HEK293 (cell line): ENCODE measurements at regions of chr9 and their contacts with region 1.

Region 1: GRCh38 chr9:72364679-72365524 is at the start of gene ZFAND5:
- H3K4me3 ChIP-seq: peak within 1 kb of the TSS; percentile 85
- H3K27ac ChIP-seq: peak within 1 kb of the TSS; percentile 97
- H3K4me1 ChIP-seq: peaks cover 13% of the 10 kb centered on the region
- CTCF ChIP-seq: peak; percentile 54; the same call in 1 of the 2 replicates

Region 2: DNA sequence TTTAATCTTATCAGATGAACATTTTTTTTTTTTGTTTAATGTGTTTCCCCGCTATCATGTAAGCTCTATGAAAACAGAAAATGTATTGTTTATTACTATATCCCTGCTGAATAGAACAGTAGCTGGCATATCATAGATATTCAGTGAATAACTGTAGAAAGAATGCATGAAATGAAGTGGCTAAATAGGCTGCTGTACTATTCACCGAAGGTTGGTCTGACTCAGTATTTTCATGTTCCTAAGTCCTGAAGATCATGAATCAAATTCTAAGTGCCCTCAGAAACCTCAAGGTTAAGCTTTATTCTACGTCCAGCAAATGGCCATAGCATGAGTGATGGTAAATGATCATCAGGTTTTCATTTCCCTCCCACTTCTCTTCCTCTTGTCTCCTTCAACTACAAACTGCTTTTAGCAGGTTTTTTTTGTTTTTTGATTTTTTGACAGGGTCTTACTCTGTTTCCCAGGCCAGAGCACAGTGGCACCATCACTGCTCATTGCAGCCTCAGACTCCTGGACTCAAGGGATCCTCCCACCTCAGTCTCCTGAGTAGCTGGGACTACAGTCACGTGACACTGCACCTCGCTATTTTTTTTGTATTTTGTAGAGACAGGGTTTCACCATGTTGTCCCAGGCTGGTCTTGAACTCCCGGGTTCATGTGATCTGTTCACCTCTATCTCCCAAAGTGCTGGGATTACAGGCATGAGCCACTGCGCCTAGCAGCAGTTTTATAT is 19.2 kb after region 1 on chr9:
- CTCF ChIA-PET with region 1: no interaction called
- POLR2A ChIA-PET with region 1: interaction called, 11 read pairs
- H3K4me3 ChIP-seq: no peak overlapping the region
- H3K27ac ChIP-seq: no peak overlapping the region
- H3K4me1 ChIP-seq: no peaks in the 10 kb centered on the region
- CTCF ChIP-seq: no peak

Region 3: DNA sequence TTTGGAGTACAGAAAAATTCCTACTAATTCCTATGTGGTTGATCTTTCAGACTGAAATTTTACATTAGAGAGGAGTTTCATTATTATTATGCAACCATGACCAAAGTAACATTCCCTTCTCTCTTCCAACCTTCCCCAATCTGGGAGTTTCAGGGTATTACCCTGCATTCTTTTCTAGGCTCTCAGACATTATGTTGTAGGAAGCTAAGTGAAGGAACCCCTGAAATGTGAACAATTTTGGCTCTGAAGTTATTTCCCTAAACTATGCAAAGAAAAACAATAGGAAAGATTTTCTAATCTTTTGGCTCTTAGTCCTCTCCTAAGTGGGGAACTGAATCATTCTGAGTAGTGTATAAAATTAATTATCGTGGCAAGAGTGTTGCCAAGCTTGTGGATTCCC is 63.4 kb after region 1 on chr9:
- CTCF ChIA-PET with region 1: no interaction called
- POLR2A ChIA-PET with region 1: interaction called, 15 read pairs
- H3K4me3 ChIP-seq: no peak overlapping the region
- H3K27ac ChIP-seq: no peak overlapping the region
- H3K4me1 ChIP-seq: no peaks in the 10 kb centered on the region; the same call in 1 of the 2 replicates
- CTCF ChIP-seq: no peak

Region 4: DNA sequence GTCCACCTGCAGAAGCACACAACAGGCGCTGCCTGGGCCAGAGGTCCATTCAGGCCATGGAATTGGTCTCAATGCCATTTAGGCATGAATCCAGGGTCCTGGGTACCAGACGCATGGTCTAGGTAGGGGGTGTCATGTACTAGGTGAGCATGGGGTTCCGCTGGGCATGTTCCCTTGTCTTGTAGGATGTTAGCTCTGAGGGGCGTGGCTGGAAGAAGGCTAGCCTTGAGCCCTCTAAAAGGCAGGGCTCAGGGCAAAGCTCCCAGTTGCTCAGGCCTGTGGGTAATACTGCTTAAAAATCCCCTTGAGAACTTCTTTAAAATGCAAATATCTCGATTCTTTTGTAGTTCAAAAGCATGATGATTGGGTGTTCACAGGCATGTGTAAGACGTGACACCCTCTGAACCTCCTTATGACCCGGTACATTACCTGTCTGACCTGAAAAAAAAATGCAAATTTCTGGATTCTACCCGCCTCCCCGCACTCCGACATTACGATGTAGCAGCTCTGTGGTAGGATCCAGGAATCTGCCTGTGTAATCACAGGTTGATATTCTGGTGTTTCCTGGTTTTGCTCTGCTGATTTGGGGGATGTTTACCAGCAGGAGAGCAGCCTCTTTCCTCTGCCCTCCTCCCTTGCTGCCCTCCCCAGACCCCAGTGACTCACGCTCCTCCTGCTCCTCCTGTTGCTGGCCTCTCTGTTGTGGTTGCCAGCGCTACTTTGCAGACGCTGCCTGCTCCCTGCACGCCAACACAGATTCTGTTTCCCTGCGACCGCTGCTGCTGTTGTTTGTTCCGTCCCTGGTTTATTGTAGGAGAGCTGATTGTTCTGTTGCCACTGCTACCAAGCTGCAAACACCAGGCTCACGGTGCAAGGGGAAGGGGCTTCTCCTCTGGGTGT is 162.2 kb after region 1 on chr9:
- CTCF ChIA-PET with region 1: no interaction called
- POLR2A ChIA-PET with region 1: interaction called, 10 read pairs
- H3K4me3 ChIP-seq: peak overlapping the region; percentile 5; the same call in 1 of the 2 replicates
- H3K27ac ChIP-seq: no peak overlapping the region
- H3K4me1 ChIP-seq: no peaks in the 10 kb centered on the region
- CTCF ChIP-seq: no peak